ENCODE measurements at regions of chr6 and their contacts with region 1.

Region 1: GRCh38 chr6:63391203-63391970 is 71.6 kb upstream of the LGSN start:
- DNase-seq: no peak
- ATAC-seq: no peak
- H3K4me3 ChIP-seq: no peak overlapping the region
- H3K27ac ChIP-seq: no peak overlapping the region
- H3K4me1 ChIP-seq: no peaks in the 10 kb centered on the region
- H3K27me3 ChIP-seq: no peaks in the 10 kb centered on the region
- CTCF ChIP-seq: no peak

Region 2: GRCh38 chr6:63459809-63460208 is 68.4 kb after region 1 on chr6:
- CTCF ChIA-PET with region 1: interaction called, 17 read pairs
- POLR2A ChIA-PET with region 1: no interaction called
- intact Hi-C with region 1: no loop called
- DNase-seq: no peak
- ATAC-seq: no peak
- H3K4me3 ChIP-seq: no peak overlapping the region
- H3K27ac ChIP-seq: no peak overlapping the region
- H3K4me1 ChIP-seq: no peaks in the 10 kb centered on the region
- H3K27me3 ChIP-seq: no peaks in the 10 kb centered on the region
- CTCF ChIP-seq: no peak

Region 3: GRCh38 chr6:63609231-63609630 is 217.8 kb after region 1 on chr6:
- CTCF ChIA-PET with region 1: no interaction called
- POLR2A ChIA-PET with region 1: no interaction called
- intact Hi-C with region 1: no loop called
- DNase-seq: no peak
- ATAC-seq: no peak
- H3K4me3 ChIP-seq: no peak overlapping the region
- H3K27ac ChIP-seq: no peak overlapping the region
- H3K4me1 ChIP-seq: no peaks in the 10 kb centered on the region
- H3K27me3 ChIP-seq: no peaks in the 10 kb centered on the region
- CTCF ChIP-seq: no peak